ENCODE measurements at regions of chr2 and their contacts with region 1.

Region 1: GRCh38 chr2:98583816-98584618 is 24.3 kb downstream of the COA5 start:
- H3K4me3 ChIP-seq: no peak overlapping the region
- H3K27ac ChIP-seq: no peak overlapping the region
- H3K4me1 ChIP-seq: no peaks in the 10 kb centered on the region; the same call in 1 of the 2 replicates
- CTCF ChIP-seq: no peak

Region 2: GRCh38 chr2:98538280-98539041 is 45.6 kb before region 1 on chr2:
- CTCF ChIA-PET with region 1: no interaction called
- POLR2A ChIA-PET with region 1: no interaction called
- H3K4me3 ChIP-seq: no peak overlapping the region
- H3K27ac ChIP-seq: no peak overlapping the region
- H3K4me1 ChIP-seq: no peaks in the 10 kb centered on the region
- CTCF ChIP-seq: no peak

Region 3: DNA sequence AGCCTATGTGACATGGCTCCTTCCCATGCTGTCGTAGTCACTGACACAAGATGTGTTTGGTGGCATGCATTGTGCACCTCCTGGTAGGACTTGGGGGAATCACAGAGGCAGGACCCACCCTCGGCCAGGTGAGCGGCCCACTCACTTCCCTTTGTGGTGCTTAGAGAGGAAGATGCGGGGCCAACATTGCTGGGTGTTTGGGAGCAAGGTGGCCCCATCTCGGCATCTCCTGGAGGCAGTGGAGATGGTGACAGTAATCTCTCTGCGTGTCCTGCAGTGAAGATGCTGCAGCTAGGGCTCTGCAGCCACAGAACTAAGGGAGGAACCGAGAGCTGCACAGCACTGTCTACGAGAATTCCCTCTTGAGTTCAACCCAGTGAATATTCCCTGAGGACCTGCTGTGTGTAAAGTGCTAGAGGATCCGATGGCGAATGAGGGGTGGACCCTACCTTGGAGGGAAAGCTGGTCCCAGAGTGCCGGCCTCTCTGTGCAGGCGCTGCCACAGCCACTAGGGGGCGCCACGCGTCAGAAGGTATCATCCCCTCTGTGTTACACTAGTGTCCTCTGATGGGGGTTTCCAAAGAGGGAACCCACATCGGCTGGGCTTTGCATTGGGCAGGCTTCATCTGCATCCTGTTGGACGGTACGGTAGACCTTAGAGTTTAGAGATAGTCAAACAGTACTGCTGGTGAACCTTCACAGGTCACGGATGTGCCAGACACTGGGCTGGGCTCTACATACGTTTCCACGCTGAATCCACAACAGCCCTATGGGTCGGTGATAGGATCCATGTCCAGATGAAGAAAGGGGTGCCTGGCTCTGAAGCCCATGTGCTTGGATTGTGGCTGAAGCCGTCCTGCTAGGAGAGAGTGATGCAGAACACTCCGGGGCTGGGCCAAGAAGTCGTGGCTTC is 14.9 kb before region 1 on chr2:
- CTCF ChIA-PET with region 1: interaction called, 11 read pairs
- POLR2A ChIA-PET with region 1: no interaction called
- H3K4me3 ChIP-seq: no peak overlapping the region
- H3K27ac ChIP-seq: no peak overlapping the region
- H3K4me1 ChIP-seq: no peaks in the 10 kb centered on the region
- CTCF ChIP-seq: peak; percentile 64

Measured in HEK293 (cell line).